AG04450 (cell line): ENCODE measurements at regions of chr13 and their contacts with region 1.

Region 1: GRCh38 chr13:95624020-95624419 is 20.5 kb downstream of the DZIP1 start:
- DNase-seq: no peak
- H3K4me3 ChIP-seq: no peak overlapping the region
- H3K27ac ChIP-seq: no peak overlapping the region
- H3K27me3 ChIP-seq: no peaks in the 10 kb centered on the region
- CTCF ChIP-seq: peak; percentile 79

Region 2: DNA sequence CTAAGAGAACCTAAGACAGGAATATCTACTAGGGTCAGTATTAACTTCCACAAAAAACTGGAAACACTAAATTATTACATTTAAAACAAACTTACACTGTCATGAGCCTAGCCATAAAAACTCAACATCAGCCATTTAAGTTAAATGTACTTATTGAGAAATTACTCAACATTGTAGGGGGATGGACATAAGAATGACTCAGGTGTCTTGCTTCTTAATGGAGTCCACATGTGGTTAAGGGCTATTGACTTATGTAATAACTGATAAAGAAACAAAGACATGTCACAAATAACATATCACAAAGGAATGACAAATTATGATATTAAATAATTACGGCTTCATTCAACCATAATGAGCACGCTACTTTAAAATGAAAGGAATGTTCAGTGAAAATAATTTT is 35.3 kb before region 1 on chr13:
- CTCF ChIA-PET with region 1: interaction called, 11 read pairs
- POLR2A ChIA-PET with region 1: no interaction called
- DNase-seq: no peak
- H3K4me3 ChIP-seq: no peak overlapping the region
- H3K27ac ChIP-seq: no peak overlapping the region
- H3K27me3 ChIP-seq: no peaks in the 10 kb centered on the region
- CTCF ChIP-seq: no peak

Region 3: DNA sequence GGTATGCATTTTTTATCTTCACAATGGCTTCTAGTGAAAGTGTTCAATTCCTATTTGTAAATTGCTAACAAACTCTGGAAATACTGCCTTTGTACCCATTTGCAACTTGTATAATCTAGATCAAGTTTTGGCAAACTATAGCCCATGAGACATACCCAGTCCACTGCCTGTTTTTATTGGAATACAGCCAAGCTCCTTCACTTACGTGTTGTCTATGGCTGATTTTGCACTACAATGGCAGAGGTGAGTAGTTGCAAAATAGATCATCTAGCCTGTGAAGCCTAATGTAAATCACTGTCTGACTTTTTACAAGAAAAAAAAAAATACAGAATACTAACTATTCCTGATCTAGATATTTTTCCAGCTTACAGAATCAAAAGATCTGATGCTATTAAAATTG is 16.7 kb before region 1 on chr13:
- CTCF ChIA-PET with region 1: interaction called, 29 read pairs
- POLR2A ChIA-PET with region 1: no interaction called
- DNase-seq: no peak
- H3K4me3 ChIP-seq: no peak overlapping the region
- H3K27ac ChIP-seq: no peak overlapping the region
- H3K27me3 ChIP-seq: no peaks in the 10 kb centered on the region
- CTCF ChIP-seq: no peak

Region 4: DNA sequence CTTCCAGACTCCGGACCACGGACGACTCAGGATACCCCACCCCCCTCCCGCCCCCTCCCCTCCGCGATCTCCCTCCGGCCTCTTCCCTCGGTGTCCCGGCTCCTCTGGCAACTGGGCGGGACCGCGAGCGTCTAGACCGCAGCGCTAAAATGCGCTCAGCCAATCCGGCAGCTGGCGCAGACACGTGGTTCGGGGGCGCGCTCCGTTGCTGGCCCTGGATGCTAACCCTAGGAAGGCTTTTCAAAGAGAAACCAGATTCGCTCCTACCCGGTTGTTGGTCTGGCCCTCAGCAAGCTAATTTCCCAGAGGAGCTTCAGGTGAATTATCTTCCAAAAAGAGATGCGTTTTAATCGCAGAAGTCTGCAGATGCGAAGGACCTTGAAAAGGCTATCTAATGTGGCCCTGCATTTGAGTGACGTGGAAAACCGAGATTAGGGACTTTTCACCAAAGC is 20.6 kb after region 1 on chr13 and contains the start of gene DZIP1:
- CTCF ChIA-PET with region 1: interaction called, 17 read pairs
- POLR2A ChIA-PET with region 1: interaction called, 7 read pairs
- DNase-seq: peak; percentile 64
- H3K4me3 ChIP-seq: peak within 1 kb of the TSS; percentile 65
- H3K27ac ChIP-seq: peak within 1 kb of the TSS; percentile 65
- H3K27me3 ChIP-seq: no peaks in the 10 kb centered on the region
- CTCF ChIP-seq: no peak
- polyA plus RNA-seq, gene DZIP1: 30.5 and 32.9 TPM in 2 replicates

Region 5: GRCh38 chr13:95822303-95822702 is 198.3 kb after region 1 on chr13:
- CTCF ChIA-PET with region 1: interaction called, 13 read pairs
- POLR2A ChIA-PET with region 1: no interaction called
- DNase-seq: no peak
- H3K4me3 ChIP-seq: no peak overlapping the region
- H3K27ac ChIP-seq: no peak overlapping the region
- H3K27me3 ChIP-seq: no peaks in the 10 kb centered on the region
- CTCF ChIP-seq: no peak